ENCODE measurements at regions of chr1 and their contacts with region 1.

Region 1: GRCh38 chr1:39183503-39184353 is 20.8 kb upstream of the MACF1 start:
- DNase-seq: peak; percentile 90
- ATAC-seq: peak; percentile 84
- H3K4me3 Mint-ChIP-seq: peak overlapping the region; percentile 30
- H3K27ac Mint-ChIP-seq: peak overlapping the region; percentile 98
- H3K4me1 Mint-ChIP-seq: peaks cover 50% of the 10 kb centered on the region
- H3K27me3 Mint-ChIP-seq: no peaks in the 10 kb centered on the region

Region 2: GRCh38 chr1:39204441-39205081 is 20.8 kb after region 1 on chr1 and contains the start of gene MACF1:
- CTCF ChIA-PET with region 1: interaction called, 107 read pairs
- POLR2A ChIA-PET with region 1: interaction called, 13 read pairs
- intact Hi-C with region 1: loop called in 1 of 2 experiments (anchors 1 kb)
- DNase-seq: peak; percentile 61
- ATAC-seq: peak; percentile 53
- H3K4me3 Mint-ChIP-seq: peak within 1 kb of the TSS; percentile 84
- H3K27ac Mint-ChIP-seq: peak within 1 kb of the TSS; percentile 96
- H3K4me1 Mint-ChIP-seq: peaks cover 65% of the 10 kb centered on the region
- H3K27me3 Mint-ChIP-seq: no peaks in the 10 kb centered on the region
- total RNA-seq, gene MACF1: 192 to 195 TPM

Region 3: DNA sequence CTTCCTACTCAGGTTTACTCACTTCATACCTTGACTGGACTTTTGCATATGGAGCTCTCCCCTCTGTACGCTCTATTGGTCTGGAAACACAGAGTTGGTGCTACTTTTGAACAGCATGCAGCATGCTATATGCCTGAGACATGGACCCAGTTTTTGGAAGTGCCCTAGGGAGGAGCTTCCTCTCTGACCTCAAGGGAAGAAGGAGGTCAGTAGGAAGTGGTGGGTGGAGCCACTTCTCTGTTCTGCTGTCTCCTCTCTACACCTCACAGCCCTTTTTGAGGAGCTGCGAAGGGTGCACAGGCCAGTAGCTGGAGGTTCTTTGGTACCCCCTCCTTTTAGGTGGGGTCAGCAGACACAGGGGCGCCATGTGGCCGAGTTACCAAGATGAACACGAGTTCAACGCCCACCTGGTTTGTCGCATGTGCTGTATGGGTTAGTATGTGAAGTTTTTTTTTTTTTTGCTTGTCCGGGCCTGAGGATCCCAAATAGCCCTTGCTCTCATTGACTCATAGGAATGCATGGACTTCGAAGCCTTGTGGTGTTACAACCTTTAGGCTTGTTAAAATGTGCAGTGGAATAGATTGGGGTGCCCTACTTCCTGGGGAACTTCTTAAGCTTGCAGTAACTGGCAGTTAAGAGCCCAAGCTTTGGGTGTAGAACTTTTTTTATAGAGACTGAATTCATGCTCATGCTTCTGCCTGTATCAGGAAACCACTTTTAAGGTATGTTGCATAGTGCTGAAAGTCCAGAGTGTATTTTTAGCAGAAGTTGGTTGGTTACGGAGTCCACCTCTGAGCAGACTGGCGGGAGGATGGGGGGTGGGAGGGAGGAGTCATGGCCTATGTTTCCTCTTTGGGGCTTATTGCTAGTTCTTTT is 31.5 kb after region 1 on chr1:
- CTCF ChIA-PET with region 1: interaction called, 9 read pairs
- POLR2A ChIA-PET with region 1: no interaction called
- intact Hi-C with region 1: loop called in 1 of 2 experiments (anchors 5 kb)
- DNase-seq: peak; percentile 63
- ATAC-seq: peak; percentile 77
- H3K4me3 Mint-ChIP-seq: peak overlapping the region; percentile 90
- H3K27ac Mint-ChIP-seq: peak overlapping the region; percentile 97
- H3K4me1 Mint-ChIP-seq: peaks cover 53% of the 10 kb centered on the region
- H3K27me3 Mint-ChIP-seq: no peaks in the 10 kb centered on the region

Region 4: GRCh38 chr1:39268112-39268581 is 84.4 kb after region 1 on chr1:
- CTCF ChIA-PET with region 1: interaction called, 174 read pairs
- POLR2A ChIA-PET with region 1: interaction called, 4 read pairs
- intact Hi-C with region 1: no loop called
- DNase-seq: peak; percentile 43
- ATAC-seq: peak; percentile 69
- H3K4me3 Mint-ChIP-seq: peak overlapping the region; percentile 57
- H3K27ac Mint-ChIP-seq: peak overlapping the region; percentile 88
- H3K4me1 Mint-ChIP-seq: peaks cover 79% of the 10 kb centered on the region
- H3K27me3 Mint-ChIP-seq: no peaks in the 10 kb centered on the region

Region 5: GRCh38 chr1:39491146-39491921 is 307.6 kb after region 1 on chr1 and contains the start of gene BMP8A:
- CTCF ChIA-PET with region 1: no interaction called
- POLR2A ChIA-PET with region 1: no interaction called
- intact Hi-C with region 1: loop called in 1 of 2 experiments (anchors 5 kb)
- DNase-seq: peak; percentile 83
- ATAC-seq: peak; percentile 92
- H3K4me3 Mint-ChIP-seq: peak within 1 kb of the TSS; percentile 43
- H3K27ac Mint-ChIP-seq: no peak within 1 kb of the TSS
- H3K4me1 Mint-ChIP-seq: peaks cover 4% of the 10 kb centered on the region
- H3K27me3 Mint-ChIP-seq: peaks cover 16% of the 10 kb centered on the region
- total RNA-seq, gene BMP8A: 0.16 TPM in 1 of 2 experiments, not detected in the other

Region 6: DNA sequence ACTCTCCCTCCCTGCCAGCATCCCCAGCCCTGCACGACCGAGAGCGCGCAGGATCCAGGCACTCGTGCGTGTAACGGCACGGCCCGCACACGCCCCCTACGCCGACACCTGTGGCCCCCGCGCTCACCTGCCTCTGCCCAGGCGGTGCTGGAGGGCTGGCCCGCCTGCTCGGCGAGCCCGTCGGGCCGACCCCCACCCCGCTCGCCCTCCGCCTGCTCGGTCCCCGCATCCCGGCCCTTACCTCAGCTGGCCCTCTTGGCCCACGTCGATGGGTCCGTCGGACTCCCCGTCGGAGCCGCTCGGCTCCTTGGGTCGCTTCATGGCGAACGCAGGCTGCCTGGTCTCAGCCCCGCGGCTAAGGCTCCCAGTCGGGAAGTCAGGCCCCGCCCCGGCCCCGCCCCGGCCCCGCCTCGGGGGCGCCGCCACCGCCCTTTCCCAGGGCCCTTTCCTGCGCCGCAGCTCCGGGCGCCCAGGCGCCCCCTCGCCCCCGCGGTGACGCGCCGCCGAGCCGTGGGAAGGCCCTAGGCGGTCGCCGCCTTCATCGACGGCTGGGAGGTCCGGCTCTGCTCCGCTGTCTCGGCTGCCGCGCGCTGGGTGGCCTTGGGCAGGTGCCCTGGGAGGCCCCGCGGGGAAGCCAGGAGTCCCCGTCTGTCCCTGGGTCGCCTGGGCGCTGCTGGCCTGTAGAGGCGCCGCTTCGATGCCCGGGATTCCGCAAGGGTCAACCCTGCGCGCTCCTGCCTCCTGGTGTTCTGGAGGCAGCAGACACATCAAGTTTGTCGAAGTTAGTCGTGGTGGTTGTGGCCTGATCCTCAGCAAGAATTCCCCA is 455.8 kb after region 1 on chr1 and contains the start of gene HEYL:
- CTCF ChIA-PET with region 1: no interaction called
- POLR2A ChIA-PET with region 1: no interaction called
- intact Hi-C with region 1: no loop called
- DNase-seq: peak; percentile 83
- ATAC-seq: peak; percentile 93
- H3K4me3 Mint-ChIP-seq: peak within 1 kb of the TSS; percentile 38
- H3K27ac Mint-ChIP-seq: no peak within 1 kb of the TSS
- H3K4me1 Mint-ChIP-seq: peaks cover 3% of the 10 kb centered on the region
- H3K27me3 Mint-ChIP-seq: peaks cover 28% of the 10 kb centered on the region
- total RNA-seq, gene HEYL: 0.19 to 0.23 TPM

Measured in activated CD4-positive, alpha-beta T cell treated with anti-CD3 and anti-CD28 coated beads for 36 hours (primary cell).